ENCODE measurements at regions of chr19 and their contacts with region 1.

Region 1: DNA sequence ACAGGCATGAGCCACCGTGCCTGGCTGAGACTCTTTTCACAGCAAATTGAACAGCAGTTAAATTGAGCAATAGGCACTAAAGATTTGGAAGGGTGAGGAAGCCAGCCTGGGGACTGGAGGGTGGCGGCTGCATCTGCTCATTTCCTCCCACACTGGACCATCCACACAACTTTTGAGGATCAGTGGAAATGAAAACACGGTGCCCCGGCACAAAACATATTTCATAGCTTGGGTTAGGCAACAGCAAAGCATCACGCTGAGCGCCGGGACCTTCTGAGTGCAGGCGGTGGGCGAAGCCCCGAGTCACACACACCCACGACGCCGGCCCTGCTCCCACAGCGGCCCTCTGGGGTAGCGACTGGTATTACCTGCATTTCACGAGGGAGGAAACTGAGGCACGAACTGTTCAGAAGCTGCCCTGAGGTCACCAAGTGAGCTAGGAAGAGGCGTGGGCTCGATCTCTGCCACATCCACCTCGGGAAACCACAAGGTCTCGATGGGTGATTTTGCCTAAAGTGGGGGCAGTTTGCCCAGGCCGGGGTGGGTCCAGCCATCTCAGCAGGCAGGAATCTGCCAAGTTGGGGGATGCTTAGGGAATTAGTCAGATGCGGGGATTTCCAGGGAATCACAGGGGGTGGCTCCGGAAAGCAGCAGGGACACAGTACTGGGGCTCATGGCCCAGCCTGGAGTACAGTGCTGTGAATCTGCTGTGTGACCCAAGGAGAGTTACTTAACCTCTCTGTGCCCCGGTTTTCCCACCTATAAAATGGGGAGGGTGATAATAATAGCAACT is 3.5 kb upstream of the SBNO2 start:
- DNase-seq: no peak
- ATAC-seq: no peak
- H3K4me3 ChIP-seq: no peak overlapping the region
- H3K4me3 Mint-ChIP-seq: no peak overlapping the region
- H3K27ac ChIP-seq: no peak overlapping the region
- H3K27ac Mint-ChIP-seq: no peak overlapping the region
- H3K4me1 ChIP-seq: peaks cover 2 to 26% of the 10 kb centered on the region in 2 experiments
- H3K4me1 Mint-ChIP-seq: peaks cover 13 to 29% (median 22%) of the 10 kb centered on the region in 3 donors
- H3K27me3 ChIP-seq: peaks cover 0 to 22% of the 10 kb centered on the region in 2 experiments
- H3K27me3 Mint-ChIP-seq: peaks cover 0 to 8% of the 10 kb centered on the region in 2 donors

Region 2: DNA sequence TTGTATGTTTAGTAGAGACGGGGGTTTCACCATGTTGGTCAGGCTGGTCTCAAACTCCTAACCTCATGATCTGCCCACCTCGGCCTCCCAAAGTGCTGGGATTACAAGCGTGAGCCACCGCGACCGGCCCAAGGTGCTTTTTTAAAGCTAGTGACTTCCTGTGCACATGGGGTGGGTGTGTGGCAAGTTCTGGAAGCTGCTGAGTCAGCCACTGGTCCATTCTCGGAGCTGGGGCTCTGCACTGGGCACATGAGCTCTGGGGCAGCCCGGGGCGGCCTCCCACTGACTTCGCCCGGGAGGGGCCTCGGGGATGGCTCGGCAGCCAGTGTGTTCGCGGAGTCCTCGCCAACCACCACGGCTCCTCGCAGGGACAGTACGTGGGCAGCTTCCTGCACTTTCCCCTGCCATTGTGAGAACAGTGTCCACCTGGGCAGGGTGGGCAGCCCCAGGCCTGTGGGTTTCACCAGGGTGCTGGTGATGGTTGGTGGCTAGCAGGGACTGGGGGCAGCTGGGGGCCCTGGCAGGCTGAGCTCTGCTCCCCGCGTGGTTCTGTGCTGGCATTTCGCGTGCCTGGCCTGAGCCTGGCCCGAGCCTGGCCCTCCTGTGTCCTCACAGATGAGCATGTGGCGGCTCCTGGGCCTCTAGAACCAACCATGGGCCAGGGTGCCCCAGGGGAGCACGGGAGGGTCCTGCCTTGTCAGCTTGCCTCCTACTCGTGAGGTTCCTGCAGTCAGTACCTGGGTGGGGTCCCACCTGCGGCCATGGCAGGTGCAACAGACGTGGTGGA is 48.1 kb after region 1 on chr19:
- CTCF ChIA-PET with region 1: no interaction called
- POLR2A ChIA-PET with region 1: interaction called in 1 of 2 experiments, 10 read pairs
- DNase-seq: no peak
- ATAC-seq: no peak
- H3K4me3 ChIP-seq: no peak overlapping the region
- H3K4me3 Mint-ChIP-seq: no peak overlapping the region
- H3K27ac ChIP-seq: no peak overlapping the region
- H3K27ac Mint-ChIP-seq: no peak overlapping the region
- H3K4me1 ChIP-seq: no peaks in the 10 kb centered on the region
- H3K4me1 Mint-ChIP-seq: no peaks in the 10 kb centered on the region
- H3K27me3 ChIP-seq: no peaks in the 10 kb centered on the region
- H3K27me3 Mint-ChIP-seq: no peaks in the 10 kb centered on the region

Measured in T-cell (primary cell).